ENCODE measurements at regions of chr4 and their contacts with region 1.

Region 1: GRCh38 chr4:40980318-40980883 is 230.6 kb downstream of the NSUN7 start:
- DNase-seq: no peak
- CTCF ChIP-seq: peak; percentile 32

Region 2: DNA sequence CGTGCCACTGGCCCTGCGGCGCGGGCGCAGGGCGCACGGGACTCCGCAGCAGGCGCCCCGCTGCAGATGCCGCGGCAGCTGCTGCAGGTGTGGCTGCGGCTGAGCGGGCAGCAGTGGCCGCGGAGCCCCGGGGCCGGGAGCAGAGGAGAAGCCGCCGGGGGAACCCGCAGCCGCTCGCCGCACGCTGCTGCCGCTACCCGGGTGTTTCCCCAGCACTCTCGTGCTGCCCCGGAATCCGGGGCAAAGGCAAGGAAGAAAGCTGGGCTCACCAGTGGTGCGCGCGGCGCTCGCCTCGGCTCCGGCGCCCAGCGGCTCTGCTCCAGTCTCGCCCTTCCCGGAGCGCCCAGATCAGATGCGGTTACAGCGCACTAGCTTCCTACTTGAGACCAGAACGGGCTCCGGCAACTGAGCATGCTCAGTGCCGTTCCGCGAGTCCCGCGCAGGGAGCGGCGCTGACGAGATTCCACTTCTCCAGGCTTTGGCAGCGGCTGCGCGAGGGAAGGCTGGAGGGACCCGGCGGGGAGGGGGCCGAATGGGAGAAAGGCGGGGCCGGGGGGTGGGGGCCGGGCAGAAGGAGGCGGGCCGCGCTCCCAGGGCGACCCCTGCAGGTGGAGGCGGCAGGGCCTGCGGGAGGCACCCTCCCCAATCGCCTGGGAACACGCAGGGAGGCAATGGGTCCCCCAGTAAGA is 233.9 kb after region 1 on chr4 and contains the start of gene APBB2:
- in situ Hi-C with region 1: loop called (anchors 10 kb)
- DNase-seq: peak; percentile 86
- CTCF ChIP-seq: peak; percentile 80